ENCODE measurements at regions of chr16 and their contacts with region 1.

Region 1: GRCh38 chr16:67372664-67373063 is 20.6 kb downstream of the TPPP3 start:
- DNase-seq: peak; percentile 30
- H3K4me3 Mint-ChIP-seq: no peak overlapping the region
- H3K27ac Mint-ChIP-seq: no peak overlapping the region
- H3K4me1 Mint-ChIP-seq: no peaks in the 10 kb centered on the region
- H3K27me3 Mint-ChIP-seq: no peaks in the 10 kb centered on the region
- CTCF ChIP-seq: peak; percentile 24

Region 2: DNA sequence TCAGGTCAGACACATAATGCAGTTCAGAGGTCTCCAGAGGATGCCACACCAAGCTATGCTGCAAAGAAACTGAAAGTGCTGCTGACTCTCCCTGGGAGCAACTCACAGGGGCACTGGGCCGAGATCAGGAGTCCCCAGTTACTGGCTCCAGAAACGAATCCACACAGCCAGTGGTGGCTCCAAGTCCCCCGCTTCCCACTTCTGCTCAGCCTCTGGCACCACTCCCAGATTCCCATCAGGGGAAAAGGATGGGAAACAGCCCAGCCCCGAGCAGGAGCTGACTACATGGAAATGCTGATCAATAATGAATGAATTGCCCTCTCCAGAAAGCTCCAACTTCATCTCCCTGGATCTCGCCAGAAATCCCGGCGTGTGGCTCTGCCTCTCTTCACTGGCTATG is 1068.5 kb before region 1 on chr16:
- CTCF ChIA-PET with region 1: no interaction called
- POLR2A ChIA-PET with region 1: no interaction called
- intact Hi-C with region 1: no loop called
- DNase-seq: no peak
- H3K4me3 Mint-ChIP-seq: no peak overlapping the region
- H3K27ac Mint-ChIP-seq: no peak overlapping the region
- H3K4me1 Mint-ChIP-seq: no peaks in the 10 kb centered on the region
- H3K27me3 Mint-ChIP-seq: peaks cover 33% of the 10 kb centered on the region
- CTCF ChIP-seq: no peak

Region 3: DNA sequence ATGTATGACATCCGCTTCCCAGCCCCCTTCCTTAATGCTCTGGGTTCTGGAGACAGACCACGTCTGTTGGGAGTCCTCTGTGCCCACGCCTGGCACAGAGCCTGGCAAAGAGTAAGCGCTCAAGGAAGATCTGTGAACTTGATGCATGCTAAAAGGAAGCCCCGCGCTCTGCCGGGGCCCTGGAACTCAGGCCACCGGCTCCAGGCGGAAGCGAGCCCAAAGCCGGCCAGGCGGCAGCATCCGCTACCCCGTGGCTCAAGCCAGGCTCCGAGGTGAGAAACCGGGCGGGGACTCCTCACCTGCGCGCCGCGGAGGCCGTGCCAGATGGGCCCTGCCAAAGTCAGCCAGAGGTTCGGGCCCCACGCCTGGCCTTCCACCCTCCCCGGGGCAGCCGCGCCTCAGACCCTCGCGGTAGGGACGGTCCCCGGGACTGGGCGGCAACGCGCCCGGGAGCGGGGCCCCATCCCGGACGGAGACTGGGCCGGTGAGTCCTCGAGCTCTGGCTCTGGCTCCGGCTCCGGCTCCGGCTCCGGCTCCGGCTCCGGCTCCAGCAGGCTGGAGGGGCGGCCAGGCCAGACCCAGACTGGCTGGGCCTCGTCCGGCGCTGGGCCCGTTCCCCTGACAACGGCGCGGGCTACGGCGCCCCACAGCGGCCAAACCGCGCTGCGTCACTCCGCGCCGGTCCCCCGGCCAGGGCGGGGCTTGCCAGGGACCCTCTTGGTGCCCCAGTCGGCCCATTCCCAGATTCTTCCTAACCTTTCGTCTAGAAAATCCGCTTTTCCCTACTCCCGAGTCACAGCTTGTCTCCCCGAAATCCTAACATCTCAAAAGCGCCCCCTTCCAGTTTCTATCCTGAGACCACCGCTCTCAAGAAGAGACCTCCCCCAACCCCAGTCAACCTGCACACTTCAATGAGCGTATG is 43.5 kb after region 1 on chr16 and contains the start of gene ZDHHC1:
- CTCF ChIA-PET with region 1: interaction called, 6 read pairs
- POLR2A ChIA-PET with region 1: no interaction called
- intact Hi-C with region 1: loop called (anchors 5 kb)
- DNase-seq: peak; percentile 60
- H3K4me3 Mint-ChIP-seq: peak within 1 kb of the TSS; percentile 81
- H3K27ac Mint-ChIP-seq: peak within 1 kb of the TSS; percentile 79
- H3K4me1 Mint-ChIP-seq: peaks cover 16% of the 10 kb centered on the region
- H3K27me3 Mint-ChIP-seq: peaks cover 14% of the 10 kb centered on the region
- CTCF ChIP-seq: peak; percentile 63
- total RNA-seq, gene ZDHHC1: 5.9 and 7.6 TPM in 2 replicates

Region 4: GRCh38 chr16:67447508-67448076 is 74.9 kb after region 1 on chr16:
- CTCF ChIA-PET with region 1: interaction called, 3 read pairs
- POLR2A ChIA-PET with region 1: no interaction called
- intact Hi-C with region 1: loop called (anchors 10 kb)
- DNase-seq: peak; percentile 75
- H3K4me3 Mint-ChIP-seq: no peak overlapping the region
- H3K27ac Mint-ChIP-seq: no peak overlapping the region
- H3K4me1 Mint-ChIP-seq: no peaks in the 10 kb centered on the region
- H3K27me3 Mint-ChIP-seq: no peaks in the 10 kb centered on the region
- CTCF ChIP-seq: peak; percentile 53

Region 5: DNA sequence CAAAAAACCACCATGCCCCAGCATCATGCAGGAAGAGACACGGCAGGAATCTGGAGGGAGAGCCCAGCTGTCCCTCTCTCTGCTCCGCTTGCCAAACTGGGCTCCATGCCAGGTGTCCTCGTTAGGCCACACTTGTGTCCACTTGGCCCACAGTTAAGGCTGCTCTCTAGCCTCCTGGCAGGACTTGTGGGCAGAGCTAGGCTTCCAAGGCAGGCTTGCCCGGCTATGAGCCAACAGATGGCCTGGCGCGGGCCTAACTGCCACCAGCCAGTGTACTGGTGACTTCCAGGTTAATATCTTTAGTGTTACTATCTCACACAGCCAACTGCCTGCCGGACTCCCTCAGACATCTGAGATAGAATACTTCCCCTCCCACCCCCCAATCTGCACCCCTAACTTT is 97.7 kb after region 1 on chr16:
- CTCF ChIA-PET with region 1: interaction called, 4 read pairs
- POLR2A ChIA-PET with region 1: no interaction called
- intact Hi-C with region 1: loop called (anchors 5 kb)
- DNase-seq: no peak
- H3K4me3 Mint-ChIP-seq: no peak overlapping the region
- H3K27ac Mint-ChIP-seq: no peak overlapping the region
- H3K4me1 Mint-ChIP-seq: peaks cover 22% of the 10 kb centered on the region
- H3K27me3 Mint-ChIP-seq: no peaks in the 10 kb centered on the region
- CTCF ChIP-seq: no peak

Region 6: GRCh38 chr16:67499106-67499505 is 126.4 kb after region 1 on chr16:
- CTCF ChIA-PET with region 1: no interaction called
- POLR2A ChIA-PET with region 1: no interaction called
- intact Hi-C with region 1: no loop called
- DNase-seq: no peak
- H3K4me3 Mint-ChIP-seq: no peak overlapping the region
- H3K27ac Mint-ChIP-seq: no peak overlapping the region
- H3K4me1 Mint-ChIP-seq: no peaks in the 10 kb centered on the region
- H3K27me3 Mint-ChIP-seq: no peaks in the 10 kb centered on the region
- CTCF ChIP-seq: no peak

Measured in MCF 10A (cell line).